ENCODE measurements at regions of chr11 and their contacts with region 1.

Region 1: GRCh38 chr11:103326070-103326794 is 217.0 kb downstream of the DYNC2H1 start:
- DNase-seq: peak; percentile 33
- H3K4me3 ChIP-seq: no peak overlapping the region
- CTCF ChIP-seq: peak; percentile 71

Region 2: DNA sequence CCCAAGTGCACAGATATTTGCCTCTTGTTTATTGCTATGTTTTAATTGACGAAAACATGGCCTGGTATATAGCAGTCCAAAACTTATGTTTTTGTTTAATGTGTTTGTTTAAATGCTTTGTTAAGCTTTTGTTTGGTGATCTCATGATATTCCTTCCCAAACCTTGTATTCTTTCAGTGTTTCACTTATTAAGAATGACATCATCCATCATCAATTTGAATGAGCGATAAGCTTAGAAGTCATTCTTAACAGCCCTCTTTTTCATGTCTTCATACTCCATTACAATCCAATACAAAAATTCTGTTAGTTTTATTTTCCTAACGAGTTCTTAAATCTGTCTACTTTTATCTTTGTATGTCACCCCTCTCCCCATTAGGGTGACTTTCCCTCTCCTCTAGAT is 11.0 kb before region 1 on chr11:
- CTCF ChIA-PET with region 1: interaction called, 10 read pairs
- POLR2A ChIA-PET with region 1: no interaction called
- DNase-seq: no peak
- H3K4me3 ChIP-seq: no peak overlapping the region
- CTCF ChIP-seq: no peak

Region 3: DNA sequence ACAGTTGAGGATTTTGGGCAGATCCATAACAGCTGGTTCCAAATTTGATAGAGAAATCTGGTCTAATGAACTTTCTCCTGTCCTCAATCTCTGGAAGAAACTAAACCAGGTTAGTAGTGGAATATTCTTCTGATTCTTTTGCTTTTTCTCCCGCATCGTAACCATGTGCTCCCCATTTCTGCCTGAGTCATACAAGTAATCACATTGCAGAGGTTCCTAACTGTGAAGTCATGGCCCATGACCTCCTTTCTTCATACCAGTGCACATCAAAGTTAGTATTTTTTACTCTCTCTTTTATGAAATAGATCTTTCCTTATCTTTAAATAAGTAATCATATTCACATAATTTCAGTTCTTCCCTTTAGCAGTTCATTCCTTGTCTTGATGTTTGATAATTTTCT is 32.0 kb after region 1 on chr11:
- CTCF ChIA-PET with region 1: interaction called, 10 read pairs
- POLR2A ChIA-PET with region 1: no interaction called
- DNase-seq: no peak
- H3K4me3 ChIP-seq: no peak overlapping the region
- CTCF ChIP-seq: no peak

Region 4: DNA sequence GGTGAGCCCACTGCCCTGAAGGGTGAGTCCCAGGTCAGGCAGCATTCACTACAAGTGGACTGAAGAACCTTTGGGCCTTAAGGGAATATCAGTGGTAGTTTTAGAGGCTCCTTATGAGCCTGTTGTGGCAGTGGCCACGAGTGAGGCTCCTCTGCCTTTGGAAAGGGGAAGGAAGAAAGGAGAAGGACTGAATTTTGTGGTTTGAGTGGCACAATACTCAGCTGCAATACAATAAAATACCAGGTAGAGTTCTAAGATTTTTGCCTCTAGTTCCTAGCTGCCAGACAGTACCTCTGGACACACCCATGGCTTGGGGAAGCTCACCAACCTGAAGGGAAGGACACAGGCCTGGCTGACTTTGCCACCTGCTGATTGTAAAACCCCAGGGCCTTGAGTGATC is 43.8 kb after region 1 on chr11:
- CTCF ChIA-PET with region 1: no interaction called
- POLR2A ChIA-PET with region 1: no interaction called
- DNase-seq: no peak
- H3K4me3 ChIP-seq: no peak overlapping the region
- CTCF ChIP-seq: no peak

Region 5: DNA sequence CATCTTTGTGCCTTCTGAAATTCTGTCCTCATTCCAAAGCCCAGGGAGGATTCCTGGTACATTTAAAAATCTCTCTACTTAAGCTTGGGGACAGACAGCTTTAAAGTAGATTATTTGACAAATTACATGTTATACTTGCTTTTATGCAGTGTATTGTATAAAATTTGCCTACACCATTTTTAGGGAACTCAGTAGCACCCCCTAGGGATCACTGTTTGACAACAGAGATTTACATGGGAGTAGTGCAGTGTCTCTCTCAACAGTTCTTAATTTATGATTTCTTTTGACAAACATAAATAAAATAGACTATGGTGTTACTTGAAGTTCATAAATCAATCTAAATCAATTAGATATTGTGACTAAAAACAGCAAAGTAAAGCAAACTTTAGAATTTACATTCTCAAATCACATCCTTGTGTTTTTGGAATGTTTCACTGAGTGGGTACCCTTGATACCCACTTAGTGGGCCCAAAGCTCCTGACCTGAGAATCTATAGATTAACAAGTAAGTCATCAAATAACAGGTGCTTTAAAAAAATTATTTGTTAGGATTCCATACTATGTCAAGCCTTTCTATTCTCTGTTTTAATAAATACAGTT is 211.8 kb after region 1 on chr11:
- CTCF ChIA-PET with region 1: interaction called, 41 read pairs
- POLR2A ChIA-PET with region 1: no interaction called
- DNase-seq: no peak
- H3K4me3 ChIP-seq: no peak overlapping the region
- CTCF ChIP-seq: peak; percentile 47

Region 6: GRCh38 chr11:103601225-103601846 is 275.1 kb after region 1 on chr11:
- CTCF ChIA-PET with region 1: interaction called, 91 read pairs
- POLR2A ChIA-PET with region 1: no interaction called
- DNase-seq: peak; percentile 41
- H3K4me3 ChIP-seq: no peak overlapping the region
- CTCF ChIP-seq: peak; percentile 88

Region 7: GRCh38 chr11:103609117-103610066 is 283.2 kb after region 1 on chr11:
- CTCF ChIA-PET with region 1: interaction called, 91 read pairs
- POLR2A ChIA-PET with region 1: no interaction called
- DNase-seq: peak; percentile 81
- H3K4me3 ChIP-seq: no peak overlapping the region
- CTCF ChIP-seq: peak; percentile 82

Measured in AG04449 (cell line).